MCF 10A (cell line): ENCODE measurements at regions of chr21 and their contacts with region 1.

Region 1: GRCh38 chr21:38853421-38853919 is 47.7 kb downstream of the ETS2 start:
- DNase-seq: peak; percentile 99
- H3K4me3 Mint-ChIP-seq: no peak overlapping the region
- H3K27ac Mint-ChIP-seq: peak overlapping the region; percentile 40
- H3K4me1 Mint-ChIP-seq: peaks cover 34% of the 10 kb centered on the region
- H3K27me3 Mint-ChIP-seq: no peaks in the 10 kb centered on the region
- CTCF ChIP-seq: no peak

Region 2: GRCh38 chr21:38798481-38798882 is 55.0 kb before region 1 on chr21:
- CTCF ChIA-PET with region 1: no interaction called
- POLR2A ChIA-PET with region 1: no interaction called
- intact Hi-C with region 1: no loop called
- DNase-seq: peak; percentile 93
- H3K4me3 Mint-ChIP-seq: peak overlapping the region; percentile 30
- H3K27ac Mint-ChIP-seq: peak overlapping the region; percentile 85
- H3K4me1 Mint-ChIP-seq: peaks cover 36% of the 10 kb centered on the region
- H3K27me3 Mint-ChIP-seq: no peaks in the 10 kb centered on the region
- CTCF ChIP-seq: no peak

Region 3: GRCh38 chr21:38839328-38840286 is 13.9 kb before region 1 on chr21:
- CTCF ChIA-PET with region 1: interaction called, 6 read pairs
- POLR2A ChIA-PET with region 1: interaction called, 27 read pairs
- intact Hi-C with region 1: no loop called
- DNase-seq: peak; percentile 89
- H3K4me3 Mint-ChIP-seq: peak overlapping the region; percentile 15
- H3K27ac Mint-ChIP-seq: peak overlapping the region; percentile 88
- H3K4me1 Mint-ChIP-seq: peaks cover 46% of the 10 kb centered on the region
- H3K27me3 Mint-ChIP-seq: no peaks in the 10 kb centered on the region
- CTCF ChIP-seq: no peak

Region 4: DNA sequence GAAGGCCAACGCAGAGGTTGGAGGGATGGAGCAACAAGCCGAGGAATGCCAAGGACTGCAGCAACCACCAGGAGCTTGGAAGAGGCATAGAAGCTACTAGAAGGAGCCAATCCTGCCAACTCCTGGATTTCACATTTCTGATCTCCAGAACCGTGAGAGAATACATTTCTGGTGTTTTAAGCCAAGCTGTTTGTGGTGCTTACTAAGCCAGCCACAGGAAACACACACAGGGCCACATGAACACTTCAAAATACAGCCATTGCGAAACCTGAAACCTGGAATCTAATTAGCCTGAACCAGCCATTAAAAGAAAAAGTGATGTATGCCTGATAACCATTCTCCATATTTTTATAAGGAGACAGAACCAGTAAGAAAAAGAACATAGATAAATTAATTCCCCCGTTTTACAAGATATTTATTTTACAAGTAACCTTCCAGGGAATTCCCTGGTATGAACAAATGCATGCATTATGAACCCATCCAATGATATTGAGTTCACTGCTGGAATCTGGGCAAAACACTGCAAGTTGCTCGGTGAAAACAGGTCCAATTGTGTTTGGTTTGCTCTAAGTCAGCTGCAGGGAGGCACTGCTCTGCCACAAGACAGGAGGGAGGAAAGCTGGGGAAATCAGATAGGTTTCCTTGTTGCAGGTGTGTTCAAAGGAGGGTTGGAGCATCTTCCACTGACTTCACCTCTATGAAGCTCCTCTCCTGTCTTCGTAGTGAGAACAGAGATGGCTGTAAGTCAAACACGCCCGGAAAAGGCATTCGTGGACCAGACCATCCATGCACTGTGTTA is 22.4 kb after region 1 on chr21:
- CTCF ChIA-PET with region 1: no interaction called
- POLR2A ChIA-PET with region 1: interaction called, 16 read pairs
- intact Hi-C with region 1: no loop called
- DNase-seq: peak; percentile 83
- H3K4me3 Mint-ChIP-seq: no peak overlapping the region
- H3K27ac Mint-ChIP-seq: peak overlapping the region; percentile 77
- H3K4me1 Mint-ChIP-seq: peaks cover 28% of the 10 kb centered on the region
- H3K27me3 Mint-ChIP-seq: no peaks in the 10 kb centered on the region
- CTCF ChIP-seq: no peak

Region 5: DNA sequence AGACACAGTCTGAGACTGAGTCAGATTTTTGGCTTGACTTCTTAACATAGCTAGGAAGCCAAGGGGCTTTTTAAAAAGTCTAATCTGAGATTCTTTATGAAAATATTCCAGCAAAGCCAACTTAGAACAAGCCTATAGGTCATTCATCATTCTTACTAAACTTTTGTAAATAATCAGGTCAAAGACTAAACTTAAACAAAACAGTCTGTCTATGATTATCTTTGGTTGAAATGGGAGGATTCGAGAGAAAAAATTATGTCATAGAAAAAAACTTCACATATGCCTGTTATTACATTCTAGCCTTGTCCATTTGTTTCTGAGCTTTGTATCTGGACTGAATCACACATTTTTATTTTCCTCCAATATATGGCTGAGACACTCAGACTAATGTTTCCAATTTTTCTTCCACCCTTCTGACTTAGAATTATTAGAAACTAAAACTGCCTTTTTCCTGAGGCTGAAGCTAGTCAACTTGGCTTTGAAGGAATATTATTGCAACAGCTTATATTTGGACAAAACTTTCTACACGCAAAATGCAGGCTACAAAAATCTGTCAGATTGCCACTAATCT is 35.6 kb after region 1 on chr21:
- CTCF ChIA-PET with region 1: no interaction called
- POLR2A ChIA-PET with region 1: interaction called, 12 read pairs
- intact Hi-C with region 1: no loop called
- DNase-seq: no peak
- H3K4me3 Mint-ChIP-seq: no peak overlapping the region
- H3K27ac Mint-ChIP-seq: no peak overlapping the region
- H3K4me1 Mint-ChIP-seq: no peaks in the 10 kb centered on the region
- H3K27me3 Mint-ChIP-seq: no peaks in the 10 kb centered on the region
- CTCF ChIP-seq: no peak

Region 6: GRCh38 chr21:38913120-38913892 is 59.8 kb after region 1 on chr21:
- CTCF ChIA-PET with region 1: no interaction called
- POLR2A ChIA-PET with region 1: interaction called, 15 read pairs
- intact Hi-C with region 1: loop called (anchors 5 kb)
- DNase-seq: peak; percentile 92
- H3K4me3 Mint-ChIP-seq: no peak overlapping the region
- H3K27ac Mint-ChIP-seq: no peak overlapping the region
- H3K4me1 Mint-ChIP-seq: peaks cover 9% of the 10 kb centered on the region
- H3K27me3 Mint-ChIP-seq: no peaks in the 10 kb centered on the region
- CTCF ChIP-seq: no peak